Sigmoid colon (tissue), 7 donors: ENCODE measurements at regions of chr7 and their contacts with region 1.

Region 1: DNA sequence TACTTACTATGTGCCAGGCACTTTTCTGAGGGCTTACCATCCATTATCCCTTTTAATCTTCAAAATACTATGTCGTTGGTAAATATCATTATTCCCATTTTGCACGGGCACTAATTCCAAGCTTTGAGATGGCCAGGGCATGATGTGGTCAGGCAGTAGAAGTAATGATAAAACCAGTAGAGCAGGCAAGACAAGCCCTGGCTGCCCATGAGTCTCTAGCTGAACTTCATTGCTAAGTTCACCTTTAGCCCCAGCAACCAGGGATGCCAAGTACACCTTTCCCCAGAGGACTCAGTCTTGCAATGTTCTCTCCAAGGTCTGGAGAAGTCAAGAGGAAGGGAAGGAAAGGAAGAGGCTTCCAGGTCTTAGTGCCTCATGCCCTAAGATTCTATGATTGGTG is 203.3 kb downstream of the PLXNA4 start:
- DNase-seq: no peak
- H3K4me3 ChIP-seq: no peak overlapping the region
- H3K27ac ChIP-seq: no peak overlapping the region
- H3K4me1 ChIP-seq: peaks cover 0 to 23% (median 16%) of the 10 kb centered on the region in 4 donors
- H3K27me3 ChIP-seq: no peaks in the 10 kb centered on the region
- CTCF ChIP-seq: no peak
- EP300 ChIP-seq: no peak
- POLR2A ChIP-seq: no peak

Region 2: DNA sequence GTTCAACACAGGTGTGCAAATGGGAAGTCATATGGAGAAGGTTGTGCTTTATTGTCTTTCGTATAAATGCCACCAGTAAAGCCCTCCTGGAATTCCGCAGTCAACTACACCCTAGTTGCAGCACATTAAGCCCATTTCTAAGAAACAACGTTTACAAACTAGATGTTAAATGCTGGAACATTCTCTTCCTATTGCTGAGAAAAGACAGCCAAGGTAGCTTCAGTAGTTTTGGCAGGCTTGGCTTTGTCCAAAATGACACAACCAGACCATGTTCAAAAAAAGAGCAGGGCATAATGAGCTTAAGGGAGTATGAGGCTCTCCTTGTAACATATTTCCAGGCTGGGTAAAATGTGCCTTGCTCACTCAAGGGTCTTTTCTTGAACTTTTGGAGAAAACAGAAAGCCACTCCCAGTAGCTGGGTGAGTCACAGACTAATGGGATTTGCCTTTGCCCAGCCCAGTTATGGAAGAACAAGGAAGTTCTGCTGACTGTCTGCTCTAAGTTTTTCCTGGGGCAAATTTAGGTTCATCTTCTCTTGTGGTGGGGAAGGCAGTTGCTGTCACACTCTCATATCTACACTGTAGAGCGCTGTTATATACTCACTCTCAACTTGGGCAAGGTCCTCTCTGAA is 35.4 kb before region 1 on chr7:
- intact Hi-C with region 1: loop called (anchors 5 kb)
- DNase-seq: no peak
- H3K4me3 ChIP-seq: no peak overlapping the region
- H3K27ac ChIP-seq: peak overlapping the region in 2 of 4 donors; percentile 55 to 57
- H3K4me1 ChIP-seq: peaks cover 0 to 17% (median 10%) of the 10 kb centered on the region in 4 donors
- H3K27me3 ChIP-seq: no peaks in the 10 kb centered on the region
- CTCF ChIP-seq: no peak
- EP300 ChIP-seq: peak in 1 of 4 donors; percentile 74
- POLR2A ChIP-seq: no peak